HepG2 (cell line): ENCODE measurements at regions of chr6 and their contacts with region 1.

Region 1: GRCh38 chr6:98633886-98634285 is 200.5 kb upstream of the POU3F2 start:
- DNase-seq: no peak
- ATAC-seq: no peak
- H3K4me3 ChIP-seq: no peak overlapping the region
- H3K27ac ChIP-seq: no peak overlapping the region
- H3K4me1 ChIP-seq: no peaks in the 10 kb centered on the region
- H3K27me3 ChIP-seq: no peaks in the 10 kb centered on the region
- CTCF ChIP-seq: no peak
- EP300 ChIP-seq: no peak
- POLR2A ChIP-seq: no peak
- RAD21 ChIP-seq: no peak

Region 2: DNA sequence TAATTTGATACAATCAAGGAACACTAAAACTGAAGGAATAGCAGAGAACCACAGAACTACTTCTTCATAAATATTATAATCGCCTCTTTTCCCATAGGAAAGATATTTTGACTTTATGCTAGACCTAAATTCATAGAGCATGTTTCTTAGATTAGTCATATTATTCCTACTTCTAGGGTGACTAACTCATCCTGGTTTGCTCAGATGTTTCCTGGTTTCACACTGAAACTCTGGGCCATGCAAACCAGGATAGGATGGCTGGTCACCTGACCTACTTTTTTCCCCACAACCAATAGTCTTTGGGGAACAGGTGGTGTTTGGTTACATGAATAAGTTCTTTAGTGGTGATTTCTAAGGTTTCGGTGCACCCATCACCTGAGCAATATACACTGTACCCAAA is 1393.7 kb before region 1 on chr6:
- CTCF ChIA-PET with region 1: no interaction called
- POLR2A ChIA-PET with region 1: no interaction called
- in situ Hi-C with region 1: no loop called
- intact Hi-C with region 1: no loop called
- DNase-seq: no peak
- ATAC-seq: no peak
- H3K4me3 ChIP-seq: no peak overlapping the region
- H3K27ac ChIP-seq: no peak overlapping the region
- H3K4me1 ChIP-seq: no peaks in the 10 kb centered on the region
- H3K27me3 ChIP-seq: no peaks in the 10 kb centered on the region
- CTCF ChIP-seq: no peak
- EP300 ChIP-seq: no peak
- POLR2A ChIP-seq: no peak
- RAD21 ChIP-seq: no peak

Region 3: DNA sequence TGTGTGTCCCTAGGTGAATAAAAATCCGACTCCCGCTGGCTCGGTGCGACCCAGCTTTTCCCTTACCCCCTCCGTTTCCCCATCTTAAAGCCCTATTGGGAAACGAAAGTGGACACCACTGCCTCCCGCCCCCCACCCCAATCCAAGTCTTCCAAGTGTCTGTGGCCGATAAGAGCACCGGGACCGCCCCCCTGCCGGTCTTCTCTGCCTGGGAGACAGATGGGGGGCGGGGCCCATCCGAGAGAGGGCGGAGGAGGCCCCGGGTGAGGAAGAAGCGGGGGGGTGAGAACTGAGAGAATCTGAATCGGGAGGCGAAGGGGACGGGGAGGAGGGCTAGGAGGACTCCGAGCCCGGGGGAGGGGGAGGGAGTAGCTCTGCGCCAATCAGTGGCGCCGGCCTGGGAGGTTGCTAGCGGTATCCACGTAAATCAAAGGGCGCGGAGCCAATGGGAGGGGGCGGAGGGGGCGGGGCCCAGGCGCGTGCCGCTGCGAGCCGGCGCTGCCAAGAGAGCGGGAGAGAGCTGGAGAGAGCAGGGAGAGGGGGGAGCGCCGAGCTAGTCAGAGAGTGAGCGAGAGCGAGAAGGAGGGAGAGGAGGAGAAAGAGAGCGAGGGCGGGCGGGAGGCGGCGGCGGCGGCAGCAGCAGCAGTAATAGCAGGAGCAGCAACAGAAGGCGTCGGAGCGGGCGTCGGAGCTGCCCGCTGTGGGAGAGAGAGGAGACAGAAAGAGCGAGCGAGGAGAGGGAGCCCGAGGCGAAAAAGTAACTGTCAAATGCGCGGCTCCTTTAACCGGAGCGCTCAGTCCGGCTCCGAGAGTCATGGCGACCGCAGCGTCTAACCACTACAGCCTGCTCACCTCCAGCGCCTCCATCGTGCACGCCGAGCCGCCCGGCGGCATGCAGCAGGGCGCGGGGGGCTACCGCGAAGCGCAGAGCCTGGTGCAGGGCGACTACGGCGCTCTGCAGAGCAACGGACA is 200.5 kb after region 1 on chr6 and contains the start of gene POU3F2:
- CTCF ChIA-PET with region 1: no interaction called
- POLR2A ChIA-PET with region 1: no interaction called
- in situ Hi-C with region 1: no loop called
- intact Hi-C with region 1: loop called (anchors 5 kb)
- DNase-seq: peak; percentile 57
- ATAC-seq: peak; percentile 71
- H3K4me3 ChIP-seq: peak within 1 kb of the TSS; percentile 46 to 60 (median 54)
- H3K27ac ChIP-seq: no peak within 1 kb of the TSS
- H3K4me1 ChIP-seq: peaks cover 25% of the 10 kb centered on the region; the same call in 1 of the 2 replicates
- H3K27me3 ChIP-seq: peaks cover 8 to 71% of the 10 kb centered on the region in 2 experiments; a peak in 4 of 5 replicates
- CTCF ChIP-seq: no peak
- EP300 ChIP-seq: no peak
- POLR2A ChIP-seq: no peak
- RAD21 ChIP-seq: no peak
- total RNA-seq, gene POU3F2: not detected in 2 replicates